ENCODE measurements at regions of chr6 and their contacts with region 1.

Region 1: GRCh38 chr6:2765166-2765895 is at the start of gene WRNIP1:
- DNase-seq: peak; percentile 93 to 99 (median 96)
- ATAC-seq: peak; percentile 84
- H3K4me3 ChIP-seq: peak within 1 kb of the TSS; percentile 72 to 76
- H3K4me3 Mint-ChIP-seq: peak within 1 kb of the TSS; percentile 95
- H3K27ac ChIP-seq: peak within 1 kb of the TSS; percentile 88 to 97
- H3K27ac Mint-ChIP-seq: peak within 1 kb of the TSS; percentile 99
- H3K4me1 ChIP-seq: peaks cover 43% of the 10 kb centered on the region
- H3K4me1 Mint-ChIP-seq: peaks cover 47% of the 10 kb centered on the region
- H3K27me3 ChIP-seq: no peaks in the 10 kb centered on the region
- H3K27me3 Mint-ChIP-seq: no peaks in the 10 kb centered on the region
- CTCF ChIP-seq: peak; percentile 35
- total RNA-seq, gene WRNIP1: 21.3 to 23.0 TPM

Region 2: GRCh38 chr6:2738373-2738979 is 26.9 kb before region 1 on chr6:
- CTCF ChIA-PET with region 1: interaction called, 11 read pairs
- POLR2A ChIA-PET with region 1: interaction called, 3 read pairs
- intact Hi-C with region 1: loop called in 1 of 2 experiments (anchors 2 kb)
- DNase-seq: peak in 8 of 9 experiments; percentile 26 to 71 (median 60)
- ATAC-seq: peak; percentile 77
- H3K4me3 ChIP-seq: no peak overlapping the region
- H3K4me3 Mint-ChIP-seq: no peak overlapping the region
- H3K27ac ChIP-seq: no peak overlapping the region
- H3K27ac Mint-ChIP-seq: no peak overlapping the region
- H3K4me1 ChIP-seq: no peaks in the 10 kb centered on the region
- H3K4me1 Mint-ChIP-seq: no peaks in the 10 kb centered on the region
- H3K27me3 ChIP-seq: no peaks in the 10 kb centered on the region
- H3K27me3 Mint-ChIP-seq: peaks cover 4% of the 10 kb centered on the region
- CTCF ChIP-seq: peak; percentile 70

Region 3: DNA sequence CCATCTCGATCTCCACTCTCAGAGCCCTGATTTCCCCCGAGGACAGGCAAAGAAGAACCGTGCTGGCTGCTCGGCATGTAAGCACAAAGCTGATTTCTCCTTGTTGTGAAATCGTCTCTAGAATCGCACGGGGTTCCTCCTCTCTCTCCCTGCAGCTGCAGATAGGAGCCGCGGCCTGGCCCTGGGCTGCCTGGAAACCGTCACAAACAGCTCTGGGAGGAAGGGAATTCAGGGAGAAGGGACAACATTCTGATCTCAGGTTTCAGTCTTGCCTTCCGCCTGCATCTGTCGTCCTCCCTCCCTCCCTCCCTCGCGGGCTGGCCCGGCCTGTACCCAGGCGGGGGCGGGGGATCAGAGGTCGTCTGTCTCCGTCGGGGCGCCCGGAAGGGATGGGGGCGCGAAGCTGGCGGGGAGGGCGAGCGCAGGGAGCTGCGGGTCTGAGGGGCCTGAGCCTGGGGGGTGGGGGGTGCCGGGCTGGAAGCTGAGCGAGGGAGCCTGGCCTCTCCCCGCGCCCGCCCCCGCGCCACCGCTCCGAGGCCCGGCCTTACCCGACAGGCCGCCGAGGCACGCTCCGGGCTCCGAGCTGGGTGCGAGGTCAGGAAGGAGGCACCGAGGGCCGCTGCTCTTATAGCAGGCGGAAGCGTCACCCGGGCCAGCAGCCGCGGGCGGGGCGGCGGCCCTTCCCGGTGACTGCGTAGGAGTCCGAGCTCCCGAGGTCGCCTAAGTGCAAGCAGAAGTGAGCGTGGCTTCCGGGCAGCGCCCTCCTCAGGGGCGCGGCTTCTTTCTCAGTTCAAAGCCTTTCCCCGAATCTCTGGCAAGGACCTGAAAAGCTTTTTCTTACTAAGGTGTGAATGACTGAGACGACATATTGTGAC is 76.2 kb after region 1 on chr6 and contains the start of gene SERPINB1:
- CTCF ChIA-PET with region 1: interaction called, 5 read pairs
- POLR2A ChIA-PET with region 1: interaction called, 19 read pairs
- intact Hi-C with region 1: loop called (anchors 1 to 5 kb)
- DNase-seq: peak; percentile 47 to 88 (median 71)
- ATAC-seq: peak; percentile 77
- H3K4me3 ChIP-seq: peak within 1 kb of the TSS; percentile 56 to 76
- H3K4me3 Mint-ChIP-seq: peak within 1 kb of the TSS; percentile 88
- H3K27ac ChIP-seq: peak within 1 kb of the TSS; percentile 58 to 68
- H3K27ac Mint-ChIP-seq: peak within 1 kb of the TSS; percentile 92
- H3K4me1 ChIP-seq: peaks cover 30% of the 10 kb centered on the region
- H3K4me1 Mint-ChIP-seq: peaks cover 56% of the 10 kb centered on the region
- H3K27me3 ChIP-seq: no peaks in the 10 kb centered on the region
- H3K27me3 Mint-ChIP-seq: no peaks in the 10 kb centered on the region
- CTCF ChIP-seq: no peak
- total RNA-seq, gene SERPINB1: 48.8 to 50.7 TPM

Region 4: GRCh38 chr6:2940010-2940850 is 174.9 kb after region 1 on chr6:
- CTCF ChIA-PET with region 1: no interaction called
- POLR2A ChIA-PET with region 1: interaction called, 9 read pairs
- intact Hi-C with region 1: loop called in 1 of 2 experiments (anchors 2 kb)
- DNase-seq: peak; percentile 52 to 91 (median 73)
- ATAC-seq: peak; percentile 70
- H3K4me3 ChIP-seq: peak overlapping the region; percentile 52 to 75
- H3K4me3 Mint-ChIP-seq: peak overlapping the region; percentile 84
- H3K27ac ChIP-seq: peak overlapping the region; percentile 73 to 84
- H3K27ac Mint-ChIP-seq: peak overlapping the region; percentile 94
- H3K4me1 ChIP-seq: peaks cover 87% of the 10 kb centered on the region
- H3K4me1 Mint-ChIP-seq: peaks cover 80% of the 10 kb centered on the region
- H3K27me3 ChIP-seq: no peaks in the 10 kb centered on the region
- H3K27me3 Mint-ChIP-seq: no peaks in the 10 kb centered on the region
- CTCF ChIP-seq: no peak

Region 5: GRCh38 chr6:3118353-3119039 is 353.2 kb after region 1 on chr6 and contains the start of gene BPHL:
- CTCF ChIA-PET with region 1: no interaction called
- POLR2A ChIA-PET with region 1: no interaction called
- intact Hi-C with region 1: loop called (anchors 2 to 5 kb)
- DNase-seq: peak; percentile 97 to 100 (median 99)
- ATAC-seq: peak; percentile 95
- H3K4me3 ChIP-seq: peak within 1 kb of the TSS; percentile 63 to 80
- H3K4me3 Mint-ChIP-seq: peak within 1 kb of the TSS; percentile 92
- H3K27ac ChIP-seq: peak within 1 kb of the TSS; percentile 85 to 90
- H3K27ac Mint-ChIP-seq: peak within 1 kb of the TSS; percentile 96
- H3K4me1 ChIP-seq: peaks cover 12% of the 10 kb centered on the region
- H3K4me1 Mint-ChIP-seq: peaks cover 13% of the 10 kb centered on the region
- H3K27me3 ChIP-seq: no peaks in the 10 kb centered on the region
- H3K27me3 Mint-ChIP-seq: no peaks in the 10 kb centered on the region
- CTCF ChIP-seq: no peak
- total RNA-seq, gene BPHL: 3.7 to 5.5 TPM

Region 6: GRCh38 chr6:3258720-3259490 is 493.6 kb after region 1 on chr6 and contains the start of gene PSMG4:
- CTCF ChIA-PET with region 1: no interaction called
- POLR2A ChIA-PET with region 1: interaction called, 3 read pairs
- intact Hi-C with region 1: loop called (anchors 2 to 5 kb)
- DNase-seq: peak; percentile 85 to 96 (median 93)
- ATAC-seq: peak; percentile 82
- H3K4me3 ChIP-seq: peak within 1 kb of the TSS; percentile 81 to 82
- H3K4me3 Mint-ChIP-seq: peak within 1 kb of the TSS; percentile 95
- H3K27ac ChIP-seq: peak within 1 kb of the TSS; percentile 54 to 76
- H3K27ac Mint-ChIP-seq: peak within 1 kb of the TSS; percentile 94
- H3K4me1 ChIP-seq: peaks cover 37% of the 10 kb centered on the region
- H3K4me1 Mint-ChIP-seq: peaks cover 42% of the 10 kb centered on the region
- H3K27me3 ChIP-seq: no peaks in the 10 kb centered on the region
- H3K27me3 Mint-ChIP-seq: no peaks in the 10 kb centered on the region
- CTCF ChIP-seq: no peak
- total RNA-seq, gene PSMG4: 11.8 to 12.0 TPM

Measured in CD8-positive, alpha-beta T cell (primary cell).